A673 (cell line): ENCODE measurements at regions of chr1 and their contacts with region 1.

Region 1: GRCh38 chr1:28518000-28518744 is 12.3 kb downstream of the RCC1 start:
- DNase-seq: peak; percentile 95
- H3K4me3 ChIP-seq: peak overlapping the region; percentile 66
- H3K27ac ChIP-seq: peak overlapping the region; percentile 96
- H3K4me1 ChIP-seq: peaks cover 14% of the 10 kb centered on the region
- H3K27me3 ChIP-seq: no peaks in the 10 kb centered on the region
- CTCF ChIP-seq: peak; percentile 95

Region 2: DNA sequence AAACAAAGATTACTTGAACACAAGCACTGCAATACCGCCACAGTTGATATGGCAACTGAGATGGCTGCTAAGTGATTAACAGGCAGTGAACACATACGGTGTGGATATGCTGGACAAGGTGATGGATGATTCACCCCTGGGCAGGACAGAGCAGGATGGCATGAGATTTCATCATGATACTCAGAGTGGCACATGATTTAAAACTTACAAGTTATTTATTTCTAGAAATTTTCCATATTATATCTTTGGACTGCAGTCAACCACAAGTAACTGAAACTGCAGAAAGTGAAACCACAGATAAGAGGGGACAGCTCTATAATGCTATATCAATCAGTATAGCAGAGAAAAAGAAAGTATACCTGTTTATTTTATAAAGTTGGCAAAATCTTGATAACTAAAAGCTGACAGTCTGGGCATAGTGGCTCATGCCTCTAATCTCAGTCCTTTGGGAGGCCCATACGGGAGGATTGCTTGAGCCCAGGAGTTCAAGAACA is 100.7 kb before region 1 on chr1:
- CTCF ChIA-PET with region 1: no interaction called
- POLR2A ChIA-PET with region 1: no interaction called
- intact Hi-C with region 1: loop called (anchors 10 kb)
- DNase-seq: no peak
- H3K4me3 ChIP-seq: no peak overlapping the region
- H3K27ac ChIP-seq: no peak overlapping the region
- H3K4me1 ChIP-seq: peaks cover 25% of the 10 kb centered on the region
- H3K27me3 ChIP-seq: no peaks in the 10 kb centered on the region
- CTCF ChIP-seq: no peak

Region 3: GRCh38 chr1:28830814-28831213 is 312.6 kb after region 1 on chr1:
- CTCF ChIA-PET with region 1: no interaction called
- POLR2A ChIA-PET with region 1: interaction called, 12 read pairs
- intact Hi-C with region 1: no loop called
- DNase-seq: no peak
- H3K4me3 ChIP-seq: no peak overlapping the region
- H3K27ac ChIP-seq: no peak overlapping the region
- H3K4me1 ChIP-seq: no peaks in the 10 kb centered on the region
- H3K27me3 ChIP-seq: no peaks in the 10 kb centered on the region
- CTCF ChIP-seq: no peak